Pancreas (tissue), 10 donors: ENCODE measurements at regions of chr16 and their contacts with region 1.

Region 1: DNA sequence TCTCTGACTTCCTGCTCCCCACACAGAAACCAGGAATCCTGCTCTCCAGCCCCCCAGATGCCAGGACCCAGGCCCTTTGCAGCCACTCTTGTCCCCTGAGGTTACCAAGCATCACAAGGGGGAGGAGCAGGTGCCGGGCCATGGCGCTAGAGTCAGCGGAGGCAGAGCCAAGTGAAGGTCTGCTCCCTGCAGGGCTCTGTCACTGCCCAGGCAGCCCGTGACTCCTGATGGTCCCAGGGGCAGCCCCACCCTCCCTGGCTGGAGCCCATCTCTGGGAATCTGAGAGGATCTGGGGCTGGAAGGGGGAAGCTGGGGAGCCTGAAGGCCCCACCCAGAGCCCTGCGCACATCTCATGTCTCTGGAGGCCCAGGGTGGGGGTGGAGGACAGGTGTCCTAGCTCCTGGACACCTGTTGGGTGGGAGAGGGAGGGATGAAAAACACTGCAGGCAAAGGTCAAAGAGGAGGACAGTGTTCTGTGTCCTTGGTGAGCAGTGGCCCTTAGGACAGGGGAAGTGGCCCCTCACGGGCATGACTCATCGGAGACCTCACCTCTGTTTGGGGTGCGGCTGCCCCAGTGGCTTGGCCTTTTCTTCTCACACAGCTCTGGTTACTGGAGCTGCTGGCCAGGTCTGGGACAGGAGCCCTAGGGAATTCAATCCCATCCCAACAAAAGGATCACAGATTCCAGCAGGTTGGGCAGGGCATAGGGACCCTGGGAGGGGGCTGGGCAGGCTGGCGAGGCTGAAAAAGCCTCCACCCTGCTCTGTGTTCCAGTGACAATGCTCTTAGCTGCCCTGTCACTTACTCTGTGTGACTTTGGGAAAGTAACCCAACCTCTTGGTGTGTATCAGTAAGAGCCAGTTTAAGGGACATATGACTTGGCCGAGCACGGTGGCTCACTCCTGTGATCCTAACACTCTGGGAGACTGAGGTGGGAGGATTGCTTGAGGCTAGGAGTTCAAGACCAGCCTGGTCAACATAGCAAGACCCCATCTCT is at the start of gene PRSS36:
- DNase-seq: peak in 1 of 6 donors; percentile 58
- ATAC-seq: peak in 1 of 4 donors; percentile 8
- H3K4me3 ChIP-seq: no peak within 1 kb of the TSS
- H3K27ac ChIP-seq: peak within 1 kb of the TSS in 1 of 4 donors; percentile 8
- H3K4me1 ChIP-seq: no peaks in the 10 kb centered on the region
- H3K27me3 ChIP-seq: no peaks in the 10 kb centered on the region
- CTCF ChIP-seq: no peak
- total RNA-seq, gene PRSS36: 0.14 to 3.1 (median 0.79) TPM

Region 2: GRCh38 chr16:31022544-31023251 is 127.5 kb before region 1 on chr16:
- intact Hi-C with region 1: no loop called
- DNase-seq: no peak
- ATAC-seq: no peak
- H3K4me3 ChIP-seq: no peak overlapping the region
- H3K27ac ChIP-seq: no peak overlapping the region
- H3K4me1 ChIP-seq: no peaks in the 10 kb centered on the region
- H3K27me3 ChIP-seq: no peaks in the 10 kb centered on the region
- CTCF ChIP-seq: no peak

Region 3: GRCh38 chr16:31094424-31095120 is 55.6 kb before region 1 on chr16 and contains the start of gene VKORC1:
- intact Hi-C with region 1: loop called in 1 of 3 experiments (anchors 5 kb)
- DNase-seq: peak; percentile 91 to 97 (median 96)
- ATAC-seq: peak; percentile 94 to 96 (median 96)
- H3K4me3 ChIP-seq: peak within 1 kb of the TSS; percentile 51 to 89 (median 82)
- H3K27ac ChIP-seq: peak within 1 kb of the TSS; percentile 73 to 91 (median 80)
- H3K4me1 ChIP-seq: peaks cover 0 to 11% (median 6%) of the 10 kb centered on the region in 3 donors
- H3K27me3 ChIP-seq: no peaks in the 10 kb centered on the region
- CTCF ChIP-seq: no peak
- total RNA-seq, gene VKORC1: 37.7 to 54.3 (median 49.7) TPM

Region 4: GRCh38 chr16:31108035-31108793 is 42.0 kb before region 1 on chr16 and contains the start of gene BCKDK:
- intact Hi-C with region 1: no loop called
- DNase-seq: peak; percentile 65 to 88 (median 75)
- ATAC-seq: peak; percentile 67 to 84 (median 83)
- H3K4me3 ChIP-seq: peak within 1 kb of the TSS; percentile 61 to 100 (median 97)
- H3K27ac ChIP-seq: peak within 1 kb of the TSS; percentile 86 to 92 (median 91)
- H3K4me1 ChIP-seq: peaks cover 5 to 20% (median 14%) of the 10 kb centered on the region in 3 donors
- H3K27me3 ChIP-seq: no peaks in the 10 kb centered on the region
- CTCF ChIP-seq: no peak
- total RNA-seq, gene BCKDK: 25.7 to 64.2 (median 37.0) TPM

Region 5: GRCh38 chr16:31206776-31207175 is 56.6 kb after region 1 on chr16:
- intact Hi-C with region 1: no loop called
- DNase-seq: no peak
- ATAC-seq: no peak
- H3K4me3 ChIP-seq: no peak overlapping the region
- H3K27ac ChIP-seq: no peak overlapping the region
- H3K4me1 ChIP-seq: no peaks in the 10 kb centered on the region
- H3K27me3 ChIP-seq: no peaks in the 10 kb centered on the region
- CTCF ChIP-seq: no peak

Region 6: GRCh38 chr16:31354394-31355291 is 204.5 kb after region 1 on chr16 and contains the start of gene ITGAX:
- intact Hi-C with region 1: no loop called
- DNase-seq: peak in 2 of 6 donors; percentile 14 to 72
- ATAC-seq: peak in 3 of 4 donors; percentile 29 to 66 (median 60)
- H3K4me3 ChIP-seq: no peak within 1 kb of the TSS
- H3K27ac ChIP-seq: peak within 1 kb of the TSS in 2 of 4 donors; percentile 25 to 37
- H3K4me1 ChIP-seq: no peaks in the 10 kb centered on the region
- H3K27me3 ChIP-seq: no peaks in the 10 kb centered on the region
- CTCF ChIP-seq: no peak
- total RNA-seq, gene ITGAX: 0.56 to 21.5 (median 1.8) TPM